HEK293 (cell line): ENCODE measurements at regions of chr9 and their contacts with region 1.

Region 1: GRCh38 chr9:130847327-130848217 is 12.5 kb downstream of the ABL1 start:
- H3K4me3 ChIP-seq: no peak overlapping the region
- H3K27ac ChIP-seq: no peak overlapping the region
- H3K4me1 ChIP-seq: no peaks in the 10 kb centered on the region; the same call in 1 of the 2 replicates
- CTCF ChIP-seq: no peak

Region 2: GRCh38 chr9:130857864-130858738 is 10.5 kb after region 1 on chr9:
- CTCF ChIA-PET with region 1: interaction called, 57 read pairs
- POLR2A ChIA-PET with region 1: interaction called, 5 read pairs
- H3K4me3 ChIP-seq: no peak overlapping the region
- H3K27ac ChIP-seq: no peak overlapping the region
- H3K4me1 ChIP-seq: no peaks in the 10 kb centered on the region
- CTCF ChIP-seq: no peak

Region 3: DNA sequence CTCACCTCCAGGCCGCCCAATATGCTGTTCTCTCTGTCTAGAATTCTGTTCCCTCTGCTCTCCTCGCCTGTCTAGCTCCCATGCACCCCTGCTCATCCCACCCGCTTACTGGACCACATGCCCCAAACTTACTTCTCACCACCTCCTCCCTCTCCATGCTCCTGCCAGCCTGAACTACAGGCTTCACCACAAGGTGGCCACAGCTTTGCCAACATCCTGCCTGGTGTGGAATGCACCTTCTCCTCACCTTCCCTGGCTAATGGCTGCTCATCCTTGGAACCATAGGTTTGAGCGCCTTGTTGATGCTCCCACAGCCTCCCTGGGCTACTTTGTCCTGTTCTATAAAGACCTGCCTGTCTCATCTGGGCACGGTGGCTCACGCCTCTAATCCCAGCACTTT is 171.0 kb after region 1 on chr9:
- CTCF ChIA-PET with region 1: no interaction called
- POLR2A ChIA-PET with region 1: no interaction called
- H3K4me3 ChIP-seq: no peak overlapping the region
- H3K27ac ChIP-seq: no peak overlapping the region
- H3K4me1 ChIP-seq: no peaks in the 10 kb centered on the region
- CTCF ChIP-seq: peak; percentile 73; the same call in 1 of the 2 replicates

Region 4: DNA sequence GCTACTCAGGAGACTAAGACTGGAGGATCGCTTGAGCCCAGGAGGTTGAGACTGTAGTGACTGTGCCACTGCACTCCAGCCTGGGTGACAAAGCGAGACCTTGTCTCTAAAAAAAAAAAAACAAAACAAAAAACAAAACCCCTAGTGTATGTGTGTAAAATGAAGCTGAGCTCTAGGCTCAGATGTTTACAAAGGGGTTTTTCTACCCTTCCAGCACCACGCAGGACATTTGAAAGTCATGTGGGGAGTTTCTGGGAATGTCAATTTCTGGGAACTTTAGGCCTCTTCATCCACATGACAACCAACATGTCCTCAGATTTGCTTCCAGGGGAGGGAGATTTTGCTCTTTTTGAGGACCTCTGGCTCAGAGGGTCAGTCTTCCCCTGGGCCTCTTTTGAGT is 206.3 kb after region 1 on chr9:
- CTCF ChIA-PET with region 1: no interaction called
- POLR2A ChIA-PET with region 1: no interaction called
- H3K4me3 ChIP-seq: no peak overlapping the region
- H3K27ac ChIP-seq: no peak overlapping the region
- H3K4me1 ChIP-seq: no peaks in the 10 kb centered on the region
- CTCF ChIP-seq: no peak